Gastrocnemius medialis (tissue), 4 donors: ENCODE measurements at regions of chr4 and their contacts with region 1.

Region 1: GRCh38 chr4:39786838-39787237 is 88.9 kb downstream of the UBE2K start:
- DNase-seq: no peak
- ATAC-seq: no peak
- H3K4me3 ChIP-seq: no peak overlapping the region
- H3K27ac ChIP-seq: no peak overlapping the region
- H3K4me1 ChIP-seq: no peaks in the 10 kb centered on the region
- H3K27me3 ChIP-seq: no peaks in the 10 kb centered on the region
- CTCF ChIP-seq: no peak
- POLR2A ChIP-seq: no peak

Region 2: DNA sequence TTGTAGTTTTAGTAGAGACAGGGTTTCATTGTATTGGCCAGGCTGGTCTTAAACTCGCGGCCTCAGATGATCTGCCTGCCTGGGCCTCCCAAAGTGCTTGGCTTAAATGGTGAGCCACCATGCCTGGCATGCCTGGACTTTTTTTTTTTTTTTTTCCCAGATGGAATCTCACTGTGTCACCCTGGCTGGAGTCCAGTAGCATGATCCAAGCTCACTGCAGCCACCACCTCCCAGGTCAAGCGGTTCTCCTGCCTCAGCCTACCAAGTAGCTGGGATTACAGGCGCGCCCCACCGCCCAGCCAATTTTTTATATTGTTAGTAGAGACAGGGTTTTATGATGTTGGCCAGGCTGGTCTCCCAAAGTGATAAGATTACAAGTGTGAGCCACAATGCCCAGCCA is 80.5 kb before region 1 on chr4:
- in situ Hi-C with region 1: no loop called
- intact Hi-C with region 1: loop called (anchors 10 kb)
- DNase-seq: peak; percentile 52 to 77
- ATAC-seq: peak; percentile 90 to 95
- H3K4me3 ChIP-seq: no peak overlapping the region
- H3K27ac ChIP-seq: peak overlapping the region; percentile 61 to 77 (median 73)
- H3K4me1 ChIP-seq: peaks cover 31 to 34% of the 10 kb centered on the region in 2 donors
- H3K27me3 ChIP-seq: no peaks in the 10 kb centered on the region
- CTCF ChIP-seq: no peak
- POLR2A ChIP-seq: no peak